ENCODE measurements at regions of chr13 and their contacts with region 1.

Region 1: GRCh38 chr13:75219479-75220237 is 262.3 kb downstream of the TBC1D4 start:
- DNase-seq: peak; percentile 27
- H3K4me3 ChIP-seq: peak overlapping the region; percentile 48
- H3K27ac ChIP-seq: no peak overlapping the region
- H3K27me3 ChIP-seq: peaks cover 11% of the 10 kb centered on the region
- CTCF ChIP-seq: peak; percentile 98

Region 2: GRCh38 chr13:73722120-73722519 is 1497.5 kb before region 1 on chr13:
- CTCF ChIA-PET with region 1: interaction called, 12 read pairs
- POLR2A ChIA-PET with region 1: no interaction called
- DNase-seq: peak; percentile 8
- H3K4me3 ChIP-seq: no peak overlapping the region
- H3K27ac ChIP-seq: no peak overlapping the region
- H3K27me3 ChIP-seq: no peaks in the 10 kb centered on the region
- CTCF ChIP-seq: peak; percentile 58

Region 3: GRCh38 chr13:75071395-75071794 is 148.3 kb before region 1 on chr13:
- CTCF ChIA-PET with region 1: no interaction called
- POLR2A ChIA-PET with region 1: no interaction called
- DNase-seq: no peak
- H3K4me3 ChIP-seq: no peak overlapping the region
- H3K27ac ChIP-seq: no peak overlapping the region
- H3K27me3 ChIP-seq: no peaks in the 10 kb centered on the region
- CTCF ChIP-seq: no peak

Region 4: DNA sequence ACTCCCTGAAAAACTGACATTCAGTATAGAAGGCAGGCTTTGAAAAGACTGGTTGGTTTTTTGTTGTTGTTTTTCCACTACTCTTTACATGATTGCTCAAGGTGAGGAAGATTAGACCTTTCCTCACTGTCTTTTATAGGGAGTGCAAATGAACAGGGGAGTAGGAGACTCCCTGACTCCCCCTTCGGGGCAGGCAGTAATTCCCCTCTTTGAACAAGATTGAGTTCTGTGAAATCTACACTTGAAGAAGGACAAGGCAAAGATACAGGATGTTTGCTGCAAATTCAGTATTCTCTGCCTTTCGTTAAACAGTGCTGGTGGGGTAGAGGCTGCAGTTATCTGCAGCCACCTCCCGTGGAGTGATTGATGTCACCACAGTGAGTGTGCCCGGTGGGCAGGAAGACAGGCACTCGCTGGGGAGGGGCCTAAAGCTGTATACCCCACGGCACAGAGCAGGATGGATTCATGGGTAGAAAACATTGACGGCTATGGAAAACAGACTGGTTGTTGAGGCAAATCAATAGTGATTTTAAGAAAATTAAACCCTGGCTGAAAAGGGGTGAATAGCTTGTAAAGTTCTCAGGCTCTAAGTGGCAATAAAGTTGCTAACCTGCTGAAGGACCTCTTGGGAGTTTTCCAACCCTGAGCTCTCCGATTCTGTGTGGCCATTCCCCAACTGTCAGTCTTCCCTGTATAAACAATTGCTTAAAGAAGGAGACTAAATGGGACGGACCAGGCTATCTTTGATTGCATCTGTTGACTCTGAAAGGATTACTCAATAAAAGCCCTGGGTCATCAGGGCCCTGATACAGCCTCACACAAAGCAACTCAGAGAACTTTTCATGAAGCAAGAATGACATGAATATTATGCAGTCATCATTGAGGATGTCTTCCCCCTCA is 46.0 kb before region 1 on chr13:
- CTCF ChIA-PET with region 1: no interaction called
- POLR2A ChIA-PET with region 1: no interaction called
- DNase-seq: no peak
- H3K4me3 ChIP-seq: no peak overlapping the region
- H3K27ac ChIP-seq: no peak overlapping the region
- H3K27me3 ChIP-seq: no peaks in the 10 kb centered on the region
- CTCF ChIP-seq: no peak

Region 5: DNA sequence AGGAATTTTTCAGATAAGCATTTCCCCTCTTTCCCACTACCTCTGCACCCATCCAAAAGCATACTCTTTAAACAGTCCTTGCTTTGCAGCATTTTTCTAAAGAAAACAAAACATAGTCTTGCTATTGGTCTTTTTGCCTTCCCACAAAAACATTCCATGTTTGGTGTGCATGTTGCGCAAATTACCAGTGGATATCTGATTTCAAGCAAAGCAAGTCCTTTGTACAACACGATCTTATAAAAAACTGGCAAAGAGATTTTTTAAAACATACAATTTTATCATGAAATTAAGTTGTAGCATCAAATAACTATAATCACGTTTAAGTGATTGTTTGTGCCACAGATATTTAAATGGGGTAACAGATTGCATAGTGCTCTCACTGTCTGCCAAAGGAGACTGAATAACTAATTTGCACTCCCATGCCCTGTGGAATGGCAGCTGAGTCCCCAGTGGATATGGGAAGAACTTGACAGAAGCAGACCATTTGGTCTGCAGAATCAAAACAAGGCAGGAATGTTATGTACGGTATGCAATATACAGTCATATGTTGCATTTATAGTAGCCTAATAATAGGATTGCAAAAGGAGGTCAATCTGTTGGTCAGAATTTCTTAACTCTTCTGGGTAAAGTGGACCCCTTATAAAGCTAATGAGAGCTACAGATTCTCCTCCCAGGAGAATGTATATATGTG is 23.4 kb before region 1 on chr13:
- CTCF ChIA-PET with region 1: interaction called, 10 read pairs
- POLR2A ChIA-PET with region 1: no interaction called
- DNase-seq: no peak
- H3K4me3 ChIP-seq: no peak overlapping the region
- H3K27ac ChIP-seq: no peak overlapping the region
- H3K27me3 ChIP-seq: no peaks in the 10 kb centered on the region
- CTCF ChIP-seq: no peak

Region 6: GRCh38 chr13:75635828-75636435 is 416.3 kb after region 1 on chr13 and contains the start of gene LMO7:
- CTCF ChIA-PET with region 1: no interaction called
- POLR2A ChIA-PET with region 1: no interaction called
- DNase-seq: no peak
- H3K4me3 ChIP-seq: peak within 1 kb of the TSS; percentile 97
- H3K27ac ChIP-seq: peak within 1 kb of the TSS; percentile 77
- H3K27me3 ChIP-seq: no peaks in the 10 kb centered on the region
- CTCF ChIP-seq: no peak
- polyA plus RNA-seq, gene LMO7: 76.9 and 92.7 TPM in 2 replicates

Measured in AG04450 (cell line).